ENCODE measurements at regions of chr1 and their contacts with region 1.

Region 1: GRCh38 chr1:44002606-44003157 is 11.3 kb downstream of the CCDC24 start:
- DNase-seq: peak; percentile 23

Region 2: GRCh38 chr1:44036409-44037139 is 33.9 kb after region 1 on chr1:
- CTCF ChIA-PET with region 1: interaction called, 38 read pairs
- POLR2A ChIA-PET with region 1: interaction called, 4 read pairs
- DNase-seq: peak; percentile 72

Region 3: GRCh38 chr1:44049839-44050238 is 47.2 kb after region 1 on chr1:
- CTCF ChIA-PET with region 1: interaction called, 38 read pairs
- POLR2A ChIA-PET with region 1: no interaction called
- DNase-seq: no peak

Region 4: GRCh38 chr1:44084998-44085675 is 82.5 kb after region 1 on chr1:
- CTCF ChIA-PET with region 1: no interaction called
- POLR2A ChIA-PET with region 1: no interaction called
- DNase-seq: no peak

Measured in HEK293T (cell line).